K562 (cell line): ENCODE measurements at regions of chr21 and their contacts with region 1.

Region 1: GRCh38 chr21:42581993-42582786 is 68.5 kb downstream of the SLC37A1 start:
- DNase-seq: no peak
- ATAC-seq: no peak
- H3K4me3 ChIP-seq: no peak overlapping the region
- H3K27ac ChIP-seq: no peak overlapping the region
- H3K4me1 ChIP-seq: peaks cover 0 to 6% of the 10 kb centered on the region in 2 experiments; a peak in 1 of 5 replicates
- H3K27me3 ChIP-seq: peaks cover 51 to 93% of the 10 kb centered on the region in 2 experiments
- CTCF ChIP-seq: no peak
- EP300 ChIP-seq: no peak
- POLR2A ChIP-seq: no peak
- RAD21 ChIP-seq: no peak

Region 2: GRCh38 chr21:42593007-42593806 is 11.0 kb after region 1 on chr21:
- CTCF ChIA-PET with region 1: no interaction called
- POLR2A ChIA-PET with region 1: interaction called, 13 read pairs
- in situ Hi-C with region 1: no loop called
- intact Hi-C with region 1: no loop called
- DNase-seq: peak; percentile 80 to 94 (median 91)
- ATAC-seq: peak; percentile 99
- H3K4me3 ChIP-seq: no peak overlapping the region
- H3K27ac ChIP-seq: no peak overlapping the region
- H3K4me1 ChIP-seq: peaks cover 0 to 8% of the 10 kb centered on the region in 2 experiments; a peak in 1 of 5 replicates
- H3K27me3 ChIP-seq: peaks cover 54 to 65% of the 10 kb centered on the region in 2 experiments
- CTCF ChIP-seq: peak; percentile 67 to 89 (median 85)
- EP300 ChIP-seq: no peak
- POLR2A ChIP-seq: no peak
- RAD21 ChIP-seq: peak; percentile 73 to 84